B cell (primary cell): ENCODE measurements at regions of chr3 and their contacts with region 1.

Region 1: GRCh38 chr3:155854141-155854940 is at the start of gene SLC33A1:
- DNase-seq: peak; percentile 100
- ATAC-seq: peak; percentile 90
- H3K4me3 ChIP-seq: peak within 1 kb of the TSS; percentile 82 to 99 (median 92)
- H3K4me3 Mint-ChIP-seq: peak within 1 kb of the TSS; percentile 97
- H3K27ac ChIP-seq: peak within 1 kb of the TSS; percentile 90 to 97
- H3K27ac Mint-ChIP-seq: peak within 1 kb of the TSS; percentile 99
- H3K4me1 ChIP-seq: peaks cover 25 to 37% of the 10 kb centered on the region in 2 donors
- H3K4me1 Mint-ChIP-seq: peaks cover 36% of the 10 kb centered on the region
- H3K27me3 ChIP-seq: no peaks in the 10 kb centered on the region
- H3K27me3 Mint-ChIP-seq: no peaks in the 10 kb centered on the region
- CTCF ChIP-seq: no peak
- total RNA-seq, gene SLC33A1: 26.9 and 29.4 TPM in 2 replicates

Region 2: GRCh38 chr3:154323891-154324738 is 1530.2 kb before region 1 on chr3 and contains the start of gene DHX36:
- CTCF ChIA-PET with region 1: no interaction called
- POLR2A ChIA-PET with region 1: no interaction called
- intact Hi-C with region 1: loop called (anchors 2 kb)
- DNase-seq: peak; percentile 94
- ATAC-seq: peak; percentile 90
- H3K4me3 ChIP-seq: peak within 1 kb of the TSS; percentile 80 to 92 (median 88)
- H3K4me3 Mint-ChIP-seq: peak within 1 kb of the TSS; percentile 98
- H3K27ac ChIP-seq: peak within 1 kb of the TSS; percentile 94 to 98
- H3K27ac Mint-ChIP-seq: peak within 1 kb of the TSS; percentile 98
- H3K4me1 ChIP-seq: peaks cover 42 to 44% of the 10 kb centered on the region in 2 donors
- H3K4me1 Mint-ChIP-seq: peaks cover 38% of the 10 kb centered on the region
- H3K27me3 ChIP-seq: no peaks in the 10 kb centered on the region
- H3K27me3 Mint-ChIP-seq: peaks cover 3% of the 10 kb centered on the region
- CTCF ChIP-seq: no peak
- total RNA-seq, gene DHX36: 113 and 132 TPM in 2 replicates

Region 3: DNA sequence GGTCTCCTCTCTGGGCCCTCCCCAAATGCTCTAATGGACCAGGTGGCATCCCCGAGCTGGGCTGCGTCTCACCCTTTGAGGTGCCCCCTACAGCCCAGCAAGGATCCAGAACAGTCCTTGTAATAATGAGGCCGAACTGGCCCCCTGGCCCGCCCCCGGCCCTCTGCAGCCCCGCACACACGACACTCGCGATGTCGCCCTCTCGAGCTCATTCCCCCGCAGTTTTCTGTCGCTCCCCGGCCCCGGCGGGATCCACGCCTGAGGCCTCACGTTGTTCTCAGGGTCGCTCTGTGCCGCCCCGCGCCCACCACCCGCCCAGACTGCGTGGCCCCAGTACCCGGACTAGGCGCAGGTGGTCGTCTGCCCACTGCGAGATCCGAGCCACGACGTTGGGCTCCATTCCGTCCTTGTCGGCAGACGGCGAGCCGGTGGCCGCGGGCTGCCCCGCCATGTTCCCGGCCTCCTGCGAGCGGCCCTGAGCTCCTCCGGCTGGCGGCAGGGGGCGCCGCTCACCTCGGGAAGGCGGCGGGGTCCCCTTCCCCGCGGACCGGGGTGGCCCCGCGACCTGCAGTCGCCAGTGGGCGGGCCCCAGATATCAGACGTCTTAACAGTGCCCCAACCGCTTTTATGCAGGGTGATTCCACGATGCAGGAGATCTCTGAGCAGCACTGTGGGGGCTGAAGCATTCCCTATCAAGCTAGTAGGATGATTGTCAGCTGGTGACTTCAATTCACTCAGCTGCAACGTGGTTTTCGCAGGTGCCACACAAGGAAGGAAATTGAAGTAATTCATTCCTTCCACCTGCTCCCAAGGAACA is 48.3 kb before region 1 on chr3 and contains the start of gene C3orf33:
- CTCF ChIA-PET with region 1: interaction called, 20 read pairs
- POLR2A ChIA-PET with region 1: interaction called, 9 read pairs
- intact Hi-C with region 1: loop called (anchors 1 kb)
- DNase-seq: peak; percentile 85
- ATAC-seq: peak; percentile 95
- H3K4me3 ChIP-seq: peak within 1 kb of the TSS; percentile 30 to 80 (median 69)
- H3K4me3 Mint-ChIP-seq: peak within 1 kb of the TSS; percentile 92
- H3K27ac ChIP-seq: peak within 1 kb of the TSS; percentile 59 to 80
- H3K27ac Mint-ChIP-seq: peak within 1 kb of the TSS; percentile 75
- H3K4me1 ChIP-seq: peaks cover 3 to 12% of the 10 kb centered on the region in 2 donors
- H3K4me1 Mint-ChIP-seq: peaks cover 5% of the 10 kb centered on the region
- H3K27me3 ChIP-seq: peaks cover 0 to 2% (median 0%) of the 10 kb centered on the region in 4 experiments
- H3K27me3 Mint-ChIP-seq: peaks cover 15% of the 10 kb centered on the region
- CTCF ChIP-seq: peak; percentile 94
- total RNA-seq, gene C3orf33: 1.7 and 1.8 TPM in 2 replicates

Region 4: DNA sequence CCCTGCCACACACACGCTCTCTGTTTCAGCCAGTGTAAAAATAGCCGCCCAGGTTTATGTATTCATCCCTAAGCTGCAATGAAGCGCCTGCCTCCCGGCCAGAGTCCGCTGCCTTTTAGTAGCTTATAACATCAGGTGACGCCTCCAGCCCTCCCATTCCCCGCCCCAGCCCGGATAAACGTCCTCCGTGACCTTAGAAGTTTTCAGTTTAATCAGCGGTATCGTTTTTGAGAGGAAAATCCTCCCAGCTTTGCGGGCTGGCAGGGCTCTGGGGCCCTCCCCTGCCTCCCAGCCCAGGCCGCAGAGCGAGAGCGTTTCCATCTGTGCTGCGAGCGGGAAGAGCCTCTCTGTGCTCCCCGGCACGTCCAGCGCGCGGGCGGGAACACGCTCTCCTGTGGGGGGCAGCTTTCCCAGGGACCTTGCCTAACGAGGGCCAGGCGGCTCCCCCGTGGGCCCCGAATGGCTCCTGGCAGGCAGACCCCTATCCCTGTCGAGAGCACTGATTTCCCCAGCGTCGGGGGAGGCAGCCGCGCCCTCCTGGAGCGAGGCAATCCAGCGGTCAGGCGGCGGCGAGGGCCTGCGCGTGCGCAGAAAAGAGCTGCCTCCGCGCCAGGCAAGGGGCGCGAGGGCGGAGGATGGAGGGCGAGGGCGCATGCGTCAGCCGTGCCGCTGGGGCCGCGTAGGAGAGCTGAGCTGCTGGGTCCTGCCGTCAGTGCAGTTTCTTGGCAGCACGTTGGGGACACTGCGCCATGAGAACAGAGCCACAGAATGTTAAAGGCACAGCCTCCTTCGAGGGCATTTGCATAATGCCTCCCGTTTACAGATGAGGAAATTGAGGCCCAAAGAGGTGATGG is 1234.5 kb after region 1 on chr3:
- CTCF ChIA-PET with region 1: no interaction called
- POLR2A ChIA-PET with region 1: no interaction called
- intact Hi-C with region 1: loop called (anchors 5 kb)
- DNase-seq: peak; percentile 96
- ATAC-seq: peak; percentile 91
- H3K4me3 ChIP-seq: peak overlapping the region; percentile 56 to 92 (median 80)
- H3K4me3 Mint-ChIP-seq: peak overlapping the region; percentile 94
- H3K27ac ChIP-seq: peak overlapping the region; percentile 76 to 98
- H3K27ac Mint-ChIP-seq: peak overlapping the region; percentile 98
- H3K4me1 ChIP-seq: peaks cover 19 to 25% of the 10 kb centered on the region in 2 donors
- H3K4me1 Mint-ChIP-seq: peaks cover 25% of the 10 kb centered on the region
- H3K27me3 ChIP-seq: peaks cover 0 to 2% (median 0%) of the 10 kb centered on the region in 4 experiments
- H3K27me3 Mint-ChIP-seq: peaks cover 8% of the 10 kb centered on the region
- CTCF ChIP-seq: no peak

Region 5: GRCh38 chr3:157174649-157175498 is 1320.5 kb after region 1 on chr3:
- CTCF ChIA-PET with region 1: no interaction called
- POLR2A ChIA-PET with region 1: no interaction called
- intact Hi-C with region 1: loop called (anchors 1 kb)
- DNase-seq: peak; percentile 99
- ATAC-seq: peak; percentile 91
- H3K4me3 ChIP-seq: peak overlapping the region; percentile 85 to 98 (median 93)
- H3K4me3 Mint-ChIP-seq: peak overlapping the region; percentile 91
- H3K27ac ChIP-seq: peak overlapping the region; percentile 89 to 97
- H3K27ac Mint-ChIP-seq: peak overlapping the region; percentile 97
- H3K4me1 ChIP-seq: peaks cover 19% of the 10 kb centered on the region in 2 donors
- H3K4me1 Mint-ChIP-seq: peaks cover 23% of the 10 kb centered on the region
- H3K27me3 ChIP-seq: no peaks in the 10 kb centered on the region
- H3K27me3 Mint-ChIP-seq: no peaks in the 10 kb centered on the region
- CTCF ChIP-seq: no peak